ENCODE measurements at regions of chr9 and their contacts with region 1.

Region 1: GRCh38 chr9:99819856-99820684 is 1.6 kb upstream of the NR4A3 start:
- DNase-seq: peak; percentile 94 to 95
- ATAC-seq: peak; percentile 67 to 80 (median 73)
- H3K4me3 ChIP-seq: peak overlapping the region; percentile 67 to 90 (median 82)
- H3K27ac ChIP-seq: peak overlapping the region; percentile 84 to 100 (median 98)
- H3K4me1 ChIP-seq: peaks cover 5 to 54% (median 32%) of the 10 kb centered on the region in 9 donors
- H3K27me3 ChIP-seq: peaks cover 0 to 30% (median 9%) of the 10 kb centered on the region in 7 donors
- CTCF ChIP-seq: peak in 5 of 9 donors; percentile 8 to 47 (median 34)

Region 2: DNA sequence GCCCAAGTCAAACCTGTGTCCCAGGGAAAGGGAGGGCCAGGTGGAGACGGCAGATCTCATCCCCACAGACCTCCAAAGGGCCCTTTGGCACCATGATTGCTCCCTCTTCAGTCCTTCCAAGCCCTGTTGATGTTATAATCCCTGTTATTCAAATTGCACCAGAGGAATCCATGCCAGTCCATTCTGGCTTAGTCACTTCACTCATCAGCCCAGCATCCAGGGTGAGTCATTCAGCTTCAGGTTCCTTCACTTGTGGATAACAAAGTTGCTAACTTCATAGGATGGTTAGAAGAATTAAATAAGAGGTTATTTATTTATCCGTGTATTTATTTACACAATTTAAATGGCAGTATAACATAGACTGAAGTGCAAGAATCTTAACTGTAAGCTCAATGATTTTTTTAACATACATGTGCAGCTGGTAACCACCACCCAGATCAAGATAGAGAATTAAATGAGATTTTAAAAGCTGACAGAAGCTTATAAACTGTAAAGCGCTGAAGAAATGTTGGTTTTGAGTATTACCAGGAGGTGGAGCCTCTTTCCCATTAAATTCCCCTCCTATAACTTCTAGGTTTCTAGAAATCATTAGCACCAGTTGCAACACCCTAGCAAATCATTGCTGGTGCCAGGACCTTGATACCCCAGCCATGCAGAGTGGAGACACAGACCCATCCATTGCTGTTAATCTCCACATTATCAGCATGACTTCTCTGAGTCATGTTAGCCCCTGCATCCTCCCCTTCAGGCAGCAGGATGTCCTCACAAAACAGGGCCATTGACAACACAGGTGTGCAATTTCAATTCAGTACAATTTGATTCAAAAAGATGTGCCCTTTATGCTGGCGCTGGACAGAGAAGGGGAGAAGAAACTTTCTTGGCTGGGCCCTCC is 520.6 kb before region 1 on chr9:
- intact Hi-C with region 1: loop called in 1 of 10 experiments (anchors 10 kb)
- DNase-seq: no peak
- ATAC-seq: peak in 2 of 8 donors; percentile 15 to 48
- H3K4me3 ChIP-seq: no peak overlapping the region
- H3K27ac ChIP-seq: no peak overlapping the region
- H3K4me1 ChIP-seq: peaks cover 0 to 10% (median 0%) of the 10 kb centered on the region in 9 donors
- H3K27me3 ChIP-seq: peaks cover 0 to 5% (median 0%) of the 10 kb centered on the region in 7 donors
- CTCF ChIP-seq: peak in 7 of 9 donors; percentile 24 to 50 (median 46)

Region 3: GRCh38 chr9:99445371-99445891 is 374.6 kb before region 1 on chr9:
- intact Hi-C with region 1: loop called in 3 of 10 experiments (anchors 5 kb)
- DNase-seq: peak; percentile 55 to 79
- ATAC-seq: peak; percentile 90 to 100 (median 96)
- H3K4me3 ChIP-seq: no peak overlapping the region
- H3K27ac ChIP-seq: peak overlapping the region in 9 of 10 donors; percentile 44 to 85 (median 72)
- H3K4me1 ChIP-seq: peaks cover 0 to 22% (median 9%) of the 10 kb centered on the region in 9 donors
- H3K27me3 ChIP-seq: no peaks in the 10 kb centered on the region
- CTCF ChIP-seq: no peak

Region 4: DNA sequence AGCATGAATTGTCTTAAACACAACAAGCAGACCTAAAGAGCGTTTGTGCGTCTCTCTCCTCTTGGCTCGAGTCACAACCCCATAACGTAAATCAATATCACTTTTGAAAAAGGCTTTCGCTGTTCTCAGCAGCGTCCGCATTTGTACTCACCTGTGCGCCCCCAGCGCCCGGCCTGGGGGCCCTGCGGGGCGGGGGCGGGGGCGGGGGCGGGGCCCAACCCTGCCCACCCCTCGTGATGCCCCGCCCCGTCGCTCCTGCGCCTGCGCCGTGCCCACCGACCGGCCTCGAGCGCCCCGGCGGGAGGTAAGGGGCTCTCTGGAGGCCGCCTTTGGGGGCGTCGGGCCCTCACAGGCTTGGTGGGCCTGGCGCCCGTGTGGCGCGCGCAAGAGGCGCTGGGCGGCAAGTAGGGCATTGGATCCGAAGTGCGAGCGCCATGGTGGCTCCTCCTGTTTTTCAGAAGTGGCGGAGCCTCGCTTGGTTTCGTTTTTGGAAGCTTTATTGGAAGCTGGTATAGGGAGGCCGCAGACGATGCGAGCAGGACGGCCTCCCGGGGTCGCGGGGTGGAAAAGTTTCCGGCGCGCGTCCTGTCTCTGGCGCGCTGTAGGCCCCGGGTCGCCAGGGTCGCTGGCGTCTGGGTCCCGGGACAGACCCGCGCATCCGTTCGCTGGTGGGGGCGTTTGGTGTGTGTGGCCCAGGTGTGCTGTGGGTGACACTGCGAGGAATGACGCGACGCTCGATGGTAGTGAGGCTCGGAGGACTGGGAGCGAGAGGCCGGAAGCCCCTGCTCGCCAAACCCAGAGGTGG is 86.5 kb after region 1 on chr9 and contains the start of gene STX17:
- intact Hi-C with region 1: loop called in 7 of 10 experiments (anchors 2 to 10 kb)
- DNase-seq: peak; percentile 77 to 86
- ATAC-seq: peak; percentile 96 to 99 (median 97)
- H3K4me3 ChIP-seq: peak within 1 kb of the TSS; percentile 74 to 99 (median 94)
- H3K27ac ChIP-seq: peak within 1 kb of the TSS; percentile 91 to 99 (median 98)
- H3K4me1 ChIP-seq: peaks cover 0 to 26% (median 18%) of the 10 kb centered on the region in 9 donors
- H3K27me3 ChIP-seq: no peaks in the 10 kb centered on the region
- CTCF ChIP-seq: peak in 3 of 9 donors; percentile 6 to 27 (median 21)
- total RNA-seq, gene STX17: 21.4 to 31.1 (median 24.1) TPM

Region 5: DNA sequence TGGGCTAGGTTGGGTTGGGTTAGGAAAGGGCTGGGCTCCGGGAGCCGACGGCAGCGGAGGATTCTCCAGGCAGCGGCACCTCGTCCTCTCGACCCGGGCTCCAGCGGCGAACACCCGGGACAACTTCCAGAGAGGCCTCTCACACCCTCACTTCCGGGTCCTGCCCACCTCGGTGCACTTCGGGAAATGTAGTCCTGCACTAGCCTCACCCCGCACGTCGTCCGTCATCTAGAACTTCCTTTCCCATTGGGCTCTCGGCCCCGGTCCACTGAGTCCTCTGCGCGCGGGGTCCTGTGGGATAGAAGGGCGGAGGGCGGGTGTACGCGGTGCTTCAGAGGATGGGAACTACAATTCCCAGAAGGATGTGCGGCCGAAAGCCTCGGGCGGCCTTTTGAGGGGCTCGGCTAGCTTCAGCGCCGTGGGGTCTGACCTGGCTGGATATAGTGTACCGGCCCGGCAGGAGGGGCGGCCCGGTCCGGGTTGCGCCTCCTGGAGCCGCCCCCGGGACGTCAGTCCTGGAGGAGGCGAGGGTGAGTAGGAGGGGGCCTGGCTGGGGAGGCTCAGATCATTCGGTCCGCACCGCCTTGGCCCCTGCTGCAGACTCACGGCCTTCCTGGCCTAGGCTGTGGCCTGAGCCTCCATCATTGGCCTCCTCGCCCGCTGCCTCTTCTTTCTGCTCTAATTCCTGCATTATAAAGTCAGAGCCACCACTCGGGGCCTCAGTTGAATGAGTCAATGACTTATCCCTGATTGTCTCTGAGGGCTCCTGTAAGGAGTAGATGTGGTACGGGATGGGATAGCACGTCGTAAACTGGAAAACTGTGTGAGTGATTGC is 279.0 kb after region 1 on chr9 and contains the starts of genes ERP44 and INVS:
- intact Hi-C with region 1: loop called in 3 of 10 experiments (anchors 2 to 5 kb)
- DNase-seq: peak; percentile 97 to 100
- ATAC-seq: peak; percentile 99 to 100 (median 99)
- H3K4me3 ChIP-seq: peak within 1 kb of the TSS; percentile 75 to 99 (median 92)
- H3K27ac ChIP-seq: peak within 1 kb of the TSS; percentile 80 to 95 (median 92)
- H3K4me1 ChIP-seq: peaks cover 0 to 39% (median 34%) of the 10 kb centered on the region in 9 donors
- H3K27me3 ChIP-seq: no peaks in the 10 kb centered on the region
- CTCF ChIP-seq: no peak
- total RNA-seq, gene ERP44: 11.9 to 19.8 (median 14.8) TPM
- total RNA-seq, gene INVS: 4.7 to 8.0 (median 6.3) TPM

Measured in heart right ventricle (tissue), 16 donors.